ENCODE measurements at regions of chr18 and their contacts with region 1.

Region 1: DNA sequence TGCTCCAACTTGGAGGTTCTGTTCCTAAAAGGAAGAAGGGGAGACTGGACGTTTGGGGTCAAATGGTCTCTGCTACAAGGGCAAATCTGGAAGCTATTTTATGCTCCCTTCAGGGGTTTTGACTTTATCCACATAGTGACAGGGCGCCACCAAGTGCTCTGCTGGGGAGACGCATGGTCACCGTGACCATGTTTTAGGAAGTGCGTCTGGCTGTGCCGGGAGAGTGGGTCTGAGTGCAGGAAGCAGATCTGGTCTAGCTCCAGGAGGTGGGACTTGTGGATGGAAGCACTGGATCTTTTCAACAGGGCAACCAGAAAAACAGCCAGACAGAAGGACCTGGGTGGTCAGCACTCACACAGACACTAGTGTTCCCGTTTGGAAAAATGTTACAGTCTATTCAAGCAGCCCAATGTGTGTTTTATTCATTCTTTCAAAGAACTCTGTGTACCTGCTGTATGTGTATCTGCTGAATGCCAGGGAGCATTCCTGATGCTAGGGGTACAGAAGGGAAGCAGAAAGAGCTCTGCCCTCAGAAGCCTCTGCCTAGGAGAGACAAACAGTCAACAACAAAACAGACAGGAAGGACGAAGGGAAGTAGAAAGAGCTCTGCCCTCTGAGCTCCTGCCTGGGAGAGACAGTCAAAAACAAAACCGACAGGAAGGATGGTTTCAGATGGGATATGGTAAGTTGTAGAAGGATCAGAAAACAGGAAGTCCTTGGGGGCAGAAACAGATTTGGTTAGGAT is 14.3 kb downstream of the IMPA2 start:
- DNase-seq: peak; percentile 19 to 61 (median 50)
- ATAC-seq: peak; percentile 92
- H3K4me3 ChIP-seq: peak overlapping the region; percentile 3
- H3K4me3 Mint-ChIP-seq: peak overlapping the region; percentile 4 to 74 (median 58)
- H3K27ac ChIP-seq: no peak overlapping the region
- H3K27ac Mint-ChIP-seq: peak overlapping the region in 6 of 9 donors; percentile 4 to 79 (median 52)
- H3K4me1 ChIP-seq: peaks cover 0 to 6% of the 10 kb centered on the region in 2 donors
- H3K4me1 Mint-ChIP-seq: peaks cover 9 to 21% (median 14%) of the 10 kb centered on the region in 7 donors
- H3K27me3 ChIP-seq: no peaks in the 10 kb centered on the region
- H3K27me3 Mint-ChIP-seq: no peaks in the 10 kb centered on the region

Region 2: GRCh38 chr18:12038639-12039417 is 43.2 kb after region 1 on chr18:
- CTCF ChIA-PET with region 1: interaction called, 3 read pairs
- POLR2A ChIA-PET with region 1: no interaction called
- intact Hi-C with region 1: loop called in 1 of 2 experiments (anchors 1 kb)
- DNase-seq: peak; percentile 41 to 84 (median 68)
- ATAC-seq: peak; percentile 95
- H3K4me3 ChIP-seq: peak overlapping the region; percentile 52
- H3K4me3 Mint-ChIP-seq: peak overlapping the region; percentile 59 to 79 (median 72)
- H3K27ac ChIP-seq: no peak overlapping the region
- H3K27ac Mint-ChIP-seq: no peak overlapping the region
- H3K4me1 ChIP-seq: no peaks in the 10 kb centered on the region
- H3K4me1 Mint-ChIP-seq: peaks cover 0 to 19% (median 0%) of the 10 kb centered on the region in 7 donors
- H3K27me3 ChIP-seq: peaks cover 0 to 3% of the 10 kb centered on the region in 2 donors
- H3K27me3 Mint-ChIP-seq: peaks cover 10 to 21% (median 14%) of the 10 kb centered on the region in 5 donors